H1 (cell line): ENCODE measurements at regions of chr10 and their contacts with region 1.

Region 1: GRCh38 chr10:33066558-33067236 is 108.7 kb upstream of the ITGB1 start:
- DNase-seq: no peak
- H3K4me3 ChIP-seq: no peak overlapping the region
- H3K27ac ChIP-seq: no peak overlapping the region
- H3K4me1 ChIP-seq: no peaks in the 10 kb centered on the region
- H3K27me3 ChIP-seq: no peaks in the 10 kb centered on the region
- CTCF ChIP-seq: peak in 2 of 3 experiments; percentile 48 to 66; a peak in 3 of 4 replicates
- EP300 ChIP-seq: no peak
- POLR2A ChIP-seq: no peak
- RAD21 ChIP-seq: peak; percentile 32 to 61; a peak in 3 of 4 replicates

Region 2: GRCh38 chr10:33041779-33042437 is 24.8 kb before region 1 on chr10:
- CTCF ChIA-PET with region 1: interaction called, 17 read pairs
- POLR2A ChIA-PET with region 1: interaction called, 3 read pairs
- DNase-seq: peak; percentile 9 to 44
- H3K4me3 ChIP-seq: 0 out of 8 replicates have a peak overlapping the region, but pooled peaks of 1 of the 4 experiments have one; percentile 7
- H3K27ac ChIP-seq: no peak overlapping the region
- H3K4me1 ChIP-seq: peaks cover 3 to 9% (median 6%) of the 10 kb centered on the region in 4 experiments; a peak in 5 of 7 replicates
- H3K27me3 ChIP-seq: no peaks in the 10 kb centered on the region; a peak in 1 of 7 replicates
- CTCF ChIP-seq: no peak
- EP300 ChIP-seq: no peak
- POLR2A ChIP-seq: no peak
- RAD21 ChIP-seq: no peak

Region 3: GRCh38 chr10:33055625-33056024 is 11.1 kb before region 1 on chr10:
- CTCF ChIA-PET with region 1: interaction called, 10 read pairs
- POLR2A ChIA-PET with region 1: no interaction called
- DNase-seq: no peak
- H3K4me3 ChIP-seq: no peak overlapping the region
- H3K27ac ChIP-seq: no peak overlapping the region
- H3K4me1 ChIP-seq: peaks cover 0 to 3% (median 0%) of the 10 kb centered on the region in 4 experiments; a peak in 2 of 7 replicates
- H3K27me3 ChIP-seq: no peaks in the 10 kb centered on the region
- CTCF ChIP-seq: no peak
- EP300 ChIP-seq: no peak
- POLR2A ChIP-seq: no peak
- RAD21 ChIP-seq: no peak